Panc1 (cell line): ENCODE measurements at regions of chr9 and their contacts with region 1.

Region 1: DNA sequence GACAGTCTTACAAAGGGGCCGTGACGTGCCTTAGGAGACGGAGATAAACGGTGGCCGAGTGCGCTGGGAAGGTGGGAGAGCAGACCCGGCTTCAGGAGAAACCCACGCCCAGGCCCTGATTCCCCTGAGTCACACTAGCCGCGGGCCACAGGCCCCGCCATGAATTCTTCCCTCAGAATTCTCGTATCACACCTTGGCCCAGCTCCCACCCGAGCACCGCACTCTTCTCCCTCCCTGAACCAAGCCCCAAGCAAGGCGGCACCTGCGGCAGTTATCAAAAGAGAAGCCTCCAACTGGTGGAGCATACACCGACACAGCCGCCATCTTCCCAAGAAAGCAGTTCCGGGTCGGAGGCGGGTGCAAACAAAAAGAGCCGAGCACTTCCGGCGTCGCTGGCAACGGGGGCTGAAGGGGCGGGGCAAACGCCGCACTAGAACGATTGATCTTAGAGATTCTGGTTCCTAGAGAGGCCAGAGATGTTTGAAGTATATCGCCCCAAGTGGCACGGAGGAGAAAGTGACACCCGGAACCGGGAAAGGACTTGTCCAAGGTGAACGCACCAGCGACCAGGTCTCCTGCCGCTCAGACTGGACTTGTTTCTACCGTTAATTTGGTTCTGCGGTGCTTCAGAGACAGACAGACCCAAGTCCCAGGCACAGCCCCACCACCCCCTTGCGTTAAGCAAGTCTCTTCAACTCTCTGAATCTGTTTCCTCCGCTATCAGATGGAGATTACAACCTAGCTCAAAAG is at the start of gene PSMB7:
- DNase-seq: peak; percentile 82
- ATAC-seq: peak; percentile 92
- H3K4me3 ChIP-seq: peak within 1 kb of the TSS; percentile 67 to 96
- H3K27ac ChIP-seq: peak within 1 kb of the TSS; percentile 94
- H3K4me1 ChIP-seq: peaks cover 24% of the 10 kb centered on the region
- H3K27me3 ChIP-seq: no peaks in the 10 kb centered on the region
- CTCF ChIP-seq: peak; percentile 82
- total RNA-seq, gene PSMB7: 167 TPM

Region 2: GRCh38 chr9:124190761-124191160 is 224.5 kb before region 1 on chr9:
- CTCF ChIA-PET with region 1: no interaction called
- POLR2A ChIA-PET with region 1: no interaction called
- in situ Hi-C with region 1: no loop called
- intact Hi-C with region 1: no loop called
- DNase-seq: no peak
- ATAC-seq: no peak
- H3K4me3 ChIP-seq: no peak overlapping the region
- H3K27ac ChIP-seq: no peak overlapping the region
- H3K4me1 ChIP-seq: no peaks in the 10 kb centered on the region
- H3K27me3 ChIP-seq: no peaks in the 10 kb centered on the region
- CTCF ChIP-seq: no peak

Region 3: GRCh38 chr9:124513376-124513994 is 98.2 kb after region 1 on chr9:
- CTCF ChIA-PET with region 1: no interaction called
- POLR2A ChIA-PET with region 1: no interaction called
- in situ Hi-C with region 1: no loop called
- intact Hi-C with region 1: loop called (anchors 10 kb)
- DNase-seq: no peak
- ATAC-seq: peak; percentile 48
- H3K4me3 ChIP-seq: no peak overlapping the region
- H3K27ac ChIP-seq: no peak overlapping the region
- H3K4me1 ChIP-seq: peaks cover 11% of the 10 kb centered on the region; the same call in 1 of the 2 replicates
- H3K27me3 ChIP-seq: no peaks in the 10 kb centered on the region
- CTCF ChIP-seq: no peak

Region 4: DNA sequence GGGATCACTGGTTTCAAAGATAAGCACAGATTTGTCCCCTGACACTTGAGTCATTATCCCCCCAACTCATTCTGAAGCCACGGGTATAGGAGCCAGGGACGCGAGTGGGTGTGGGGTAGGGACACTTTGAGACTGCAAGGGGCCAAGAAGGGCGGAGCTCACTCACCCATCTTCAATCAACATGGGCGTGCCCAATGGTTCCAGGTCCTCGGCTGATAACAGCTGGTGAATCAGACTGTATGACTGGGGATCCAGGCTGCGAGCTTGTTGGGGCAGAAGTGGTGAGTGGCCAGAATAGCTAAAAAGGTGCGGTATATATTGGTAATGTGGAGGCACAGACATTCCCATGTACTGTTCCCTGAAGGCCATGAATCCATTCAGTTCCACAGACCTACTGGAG is 122.6 kb after region 1 on chr9:
- CTCF ChIA-PET with region 1: interaction called, 12 read pairs
- POLR2A ChIA-PET with region 1: no interaction called
- in situ Hi-C with region 1: no loop called
- intact Hi-C with region 1: no loop called
- DNase-seq: no peak
- ATAC-seq: no peak
- H3K4me3 ChIP-seq: no peak overlapping the region
- H3K27ac ChIP-seq: no peak overlapping the region
- H3K4me1 ChIP-seq: no peaks in the 10 kb centered on the region
- H3K27me3 ChIP-seq: no peaks in the 10 kb centered on the region
- CTCF ChIP-seq: no peak